CD8-positive, alpha-beta T cell (primary cell): ENCODE measurements at regions of chr6 and their contacts with region 1.

Region 1: DNA sequence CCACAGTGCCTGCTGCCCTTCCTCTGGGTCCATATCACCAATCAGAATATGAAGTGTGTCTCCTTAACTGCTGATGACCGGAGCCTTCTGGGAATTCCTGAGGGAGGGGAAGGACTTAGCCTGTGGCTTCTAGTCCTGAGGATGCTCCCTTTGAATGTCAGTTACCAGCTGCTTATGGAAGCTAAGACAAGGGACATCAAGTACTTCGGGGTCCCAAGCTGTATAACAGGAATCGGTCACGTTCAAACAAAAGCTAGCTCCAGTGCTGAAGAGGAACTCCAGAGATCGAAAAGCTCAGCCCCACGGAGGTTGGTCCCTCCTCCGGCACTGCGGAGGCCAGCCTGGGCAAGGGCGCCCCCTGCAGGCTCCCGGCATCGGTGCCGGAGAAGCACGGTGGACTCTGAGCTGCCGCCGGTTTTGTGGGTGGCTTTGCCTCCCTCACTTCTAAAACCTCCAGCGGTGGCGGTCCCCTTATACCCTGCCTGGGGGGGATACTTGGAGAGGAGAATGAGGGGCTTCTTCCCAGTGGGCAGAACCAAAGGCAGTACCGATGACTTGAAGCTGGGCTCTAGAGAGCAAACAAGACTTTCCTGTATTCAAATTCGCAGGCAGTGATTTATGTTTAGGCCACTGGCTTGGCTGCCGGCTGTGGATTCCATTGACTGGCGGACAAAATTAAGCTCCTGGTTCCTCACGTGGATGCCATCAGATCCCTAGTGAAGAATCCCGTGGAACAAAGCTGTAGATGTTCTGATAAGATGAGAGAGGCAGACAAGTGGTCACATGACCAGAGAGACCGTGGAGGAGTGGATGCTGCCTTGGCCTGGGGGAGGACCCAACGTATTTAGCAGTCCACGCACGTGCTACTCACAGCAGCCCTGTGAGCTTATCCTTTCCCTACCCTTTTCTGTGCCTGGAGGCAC is 16.2 kb upstream of the UBR2 start:
- DNase-seq: peak; percentile 76 to 94 (median 85)
- ATAC-seq: peak; percentile 99
- H3K4me3 ChIP-seq: peak overlapping the region; percentile 19 to 36
- H3K4me3 Mint-ChIP-seq: peak overlapping the region; percentile 67
- H3K27ac ChIP-seq: no peak overlapping the region
- H3K27ac Mint-ChIP-seq: no peak overlapping the region
- H3K4me1 ChIP-seq: peaks cover 3% of the 10 kb centered on the region
- H3K4me1 Mint-ChIP-seq: peaks cover 11% of the 10 kb centered on the region
- H3K27me3 ChIP-seq: no peaks in the 10 kb centered on the region
- H3K27me3 Mint-ChIP-seq: peaks cover 3% of the 10 kb centered on the region
- CTCF ChIP-seq: peak; percentile 96

Region 2: DNA sequence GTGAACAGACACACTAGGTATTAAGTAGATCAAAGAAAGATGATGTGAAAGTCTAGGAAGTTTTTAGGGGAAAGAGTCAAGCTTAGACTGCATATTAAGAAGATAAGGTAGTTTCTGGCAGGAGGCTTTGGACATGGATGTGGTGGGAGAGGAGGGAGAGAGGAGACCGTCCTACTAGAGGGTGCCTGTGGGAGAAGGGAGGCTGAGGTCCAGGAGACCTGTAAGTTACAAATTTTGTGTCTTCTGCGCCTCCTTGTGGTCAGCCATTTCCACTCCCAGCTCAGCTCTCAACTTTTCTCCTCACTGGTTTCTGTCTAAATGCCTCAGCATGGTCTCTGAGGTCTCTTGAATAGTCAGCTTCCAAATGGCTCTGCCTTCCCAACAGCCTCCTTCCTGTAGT is 1702.1 kb before region 1 on chr6:
- CTCF ChIA-PET with region 1: no interaction called
- POLR2A ChIA-PET with region 1: no interaction called
- intact Hi-C with region 1: no loop called
- DNase-seq: peak in 3 of 9 experiments; percentile 7 to 42 (median 38)
- ATAC-seq: no peak
- H3K4me3 ChIP-seq: no peak overlapping the region
- H3K4me3 Mint-ChIP-seq: no peak overlapping the region
- H3K27ac ChIP-seq: no peak overlapping the region
- H3K27ac Mint-ChIP-seq: no peak overlapping the region
- H3K4me1 ChIP-seq: no peaks in the 10 kb centered on the region
- H3K4me1 Mint-ChIP-seq: no peaks in the 10 kb centered on the region
- H3K27me3 ChIP-seq: no peaks in the 10 kb centered on the region
- H3K27me3 Mint-ChIP-seq: peaks cover 14% of the 10 kb centered on the region
- CTCF ChIP-seq: peak; percentile 35

Region 3: GRCh38 chr6:41584668-41585205 is 962.9 kb before region 1 on chr6:
- CTCF ChIA-PET with region 1: no interaction called
- POLR2A ChIA-PET with region 1: no interaction called
- intact Hi-C with region 1: no loop called
- DNase-seq: no peak
- ATAC-seq: no peak
- H3K4me3 ChIP-seq: no peak overlapping the region
- H3K4me3 Mint-ChIP-seq: no peak overlapping the region
- H3K27ac ChIP-seq: no peak overlapping the region
- H3K27ac Mint-ChIP-seq: no peak overlapping the region
- H3K4me1 ChIP-seq: no peaks in the 10 kb centered on the region
- H3K4me1 Mint-ChIP-seq: peaks cover 6% of the 10 kb centered on the region
- H3K27me3 ChIP-seq: no peaks in the 10 kb centered on the region
- H3K27me3 Mint-ChIP-seq: no peaks in the 10 kb centered on the region
- CTCF ChIP-seq: no peak

Region 4: GRCh38 chr6:42104095-42104806 is 443.4 kb before region 1 on chr6:
- CTCF ChIA-PET with region 1: interaction called, 10 read pairs
- POLR2A ChIA-PET with region 1: no interaction called
- intact Hi-C with region 1: no loop called
- DNase-seq: peak; percentile 38 to 86 (median 72)
- ATAC-seq: peak; percentile 89
- H3K4me3 ChIP-seq: peak overlapping the region; percentile 45 to 69
- H3K4me3 Mint-ChIP-seq: peak overlapping the region; percentile 72
- H3K27ac ChIP-seq: peak overlapping the region; percentile 11 to 38
- H3K27ac Mint-ChIP-seq: peak overlapping the region; percentile 62
- H3K4me1 ChIP-seq: peaks cover 8% of the 10 kb centered on the region
- H3K4me1 Mint-ChIP-seq: peaks cover 7% of the 10 kb centered on the region
- H3K27me3 ChIP-seq: no peaks in the 10 kb centered on the region
- H3K27me3 Mint-ChIP-seq: no peaks in the 10 kb centered on the region
- CTCF ChIP-seq: peak; percentile 98

Region 5: DNA sequence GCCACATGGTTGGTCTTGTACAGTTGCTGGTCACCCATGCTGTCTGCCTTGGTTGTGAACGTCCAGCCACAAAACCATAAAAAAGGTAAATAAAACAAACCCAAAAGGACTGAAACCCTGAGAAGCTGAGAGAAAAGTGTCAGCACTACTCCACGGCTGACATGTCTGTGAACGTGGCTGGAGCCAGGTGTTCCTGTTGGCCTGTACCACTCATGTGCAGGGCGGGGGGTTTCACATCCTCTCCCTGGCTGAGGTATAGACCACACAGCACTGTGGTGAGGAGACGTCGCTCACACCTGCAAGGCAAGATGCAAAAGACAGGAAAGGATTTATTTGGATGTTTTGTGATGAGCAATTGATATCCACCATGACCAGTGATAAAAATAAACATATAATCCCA is 278.1 kb before region 1 on chr6:
- CTCF ChIA-PET with region 1: interaction called, 105 read pairs
- POLR2A ChIA-PET with region 1: no interaction called
- intact Hi-C with region 1: no loop called
- DNase-seq: peak in 6 of 9 experiments; percentile 22 to 72 (median 52)
- ATAC-seq: peak; percentile 94
- H3K4me3 ChIP-seq: no peak overlapping the region
- H3K4me3 Mint-ChIP-seq: no peak overlapping the region
- H3K27ac ChIP-seq: peak overlapping the region in 1 of 2 experiments; percentile 2
- H3K27ac Mint-ChIP-seq: peak overlapping the region; percentile 75
- H3K4me1 ChIP-seq: peaks cover 13% of the 10 kb centered on the region
- H3K4me1 Mint-ChIP-seq: peaks cover 16% of the 10 kb centered on the region
- H3K27me3 ChIP-seq: no peaks in the 10 kb centered on the region
- H3K27me3 Mint-ChIP-seq: no peaks in the 10 kb centered on the region
- CTCF ChIP-seq: no peak

Region 6: DNA sequence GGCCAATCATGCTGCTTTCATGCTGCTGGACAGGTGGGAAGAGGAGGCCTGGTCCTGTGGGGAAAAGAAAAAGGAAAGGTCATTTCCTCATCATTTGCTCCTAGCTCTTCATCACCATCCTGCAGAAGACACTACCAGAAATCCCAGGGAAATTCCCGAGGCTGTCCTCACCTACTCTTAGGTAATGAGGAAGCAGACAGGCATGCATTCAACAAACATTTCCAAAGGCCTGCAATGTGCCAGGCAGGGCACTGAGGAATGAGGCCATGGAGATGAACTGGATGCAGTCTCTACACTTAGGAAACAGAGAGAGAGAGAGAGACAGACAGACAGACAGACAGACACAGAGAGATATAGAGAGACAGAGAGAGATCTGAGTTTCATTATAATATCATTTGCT is 247.0 kb before region 1 on chr6:
- CTCF ChIA-PET with region 1: interaction called, 10 read pairs
- POLR2A ChIA-PET with region 1: no interaction called
- intact Hi-C with region 1: no loop called
- DNase-seq: no peak
- ATAC-seq: no peak
- H3K4me3 ChIP-seq: no peak overlapping the region
- H3K4me3 Mint-ChIP-seq: no peak overlapping the region
- H3K27ac ChIP-seq: no peak overlapping the region
- H3K27ac Mint-ChIP-seq: peak overlapping the region; percentile 47
- H3K4me1 ChIP-seq: peaks cover 17% of the 10 kb centered on the region
- H3K4me1 Mint-ChIP-seq: peaks cover 55% of the 10 kb centered on the region
- H3K27me3 ChIP-seq: no peaks in the 10 kb centered on the region
- H3K27me3 Mint-ChIP-seq: no peaks in the 10 kb centered on the region
- CTCF ChIP-seq: no peak

Region 7: DNA sequence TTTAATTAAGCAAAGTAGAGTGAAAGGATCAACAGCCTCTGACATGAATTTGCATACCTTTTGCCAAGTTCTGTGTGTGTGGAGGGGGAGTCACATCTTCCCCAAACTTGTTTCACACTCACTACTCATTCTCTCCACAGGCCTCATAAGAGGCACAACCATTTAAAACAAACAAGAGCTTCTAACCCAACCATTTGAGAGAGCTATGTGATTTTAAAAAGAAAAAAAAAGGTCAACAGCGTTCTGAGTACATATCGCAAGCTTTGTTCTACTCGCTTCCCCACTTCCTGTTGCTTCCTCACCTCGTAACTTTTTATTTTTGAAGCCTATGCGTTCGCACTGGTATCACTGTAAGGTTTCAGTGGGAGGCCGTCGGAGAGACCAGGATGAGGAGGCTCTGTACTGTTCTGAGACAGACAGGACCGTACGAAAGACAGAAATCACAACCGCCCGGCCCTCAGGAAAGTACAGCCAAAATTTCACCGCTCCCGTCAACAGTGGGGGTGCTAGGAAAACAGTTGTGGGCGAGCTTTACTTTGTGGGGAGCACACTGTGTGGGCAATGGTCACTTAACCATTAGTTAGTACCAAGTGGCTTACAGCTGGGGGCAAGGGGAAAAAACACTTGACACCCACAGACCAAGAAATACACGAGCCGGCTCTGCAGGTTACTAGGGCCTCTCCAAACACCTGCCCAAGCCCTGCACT is 157.3 kb before region 1 on chr6:
- CTCF ChIA-PET with region 1: interaction called, 30 read pairs
- POLR2A ChIA-PET with region 1: no interaction called
- intact Hi-C with region 1: no loop called
- DNase-seq: peak; percentile 22 to 88 (median 62)
- ATAC-seq: peak; percentile 77
- H3K4me3 ChIP-seq: peak overlapping the region; percentile 10 to 31
- H3K4me3 Mint-ChIP-seq: peak overlapping the region; percentile 80
- H3K27ac ChIP-seq: peak overlapping the region; percentile 74 to 86
- H3K27ac Mint-ChIP-seq: peak overlapping the region; percentile 100
- H3K4me1 ChIP-seq: peaks cover 99% of the 10 kb centered on the region
- H3K4me1 Mint-ChIP-seq: peaks cover 97% of the 10 kb centered on the region
- H3K27me3 ChIP-seq: no peaks in the 10 kb centered on the region
- H3K27me3 Mint-ChIP-seq: no peaks in the 10 kb centered on the region
- CTCF ChIP-seq: no peak

Region 8: GRCh38 chr6:42453031-42453653 is 94.5 kb before region 1 on chr6:
- CTCF ChIA-PET with region 1: interaction called, 19 read pairs
- POLR2A ChIA-PET with region 1: interaction called, 4 read pairs
- intact Hi-C with region 1: loop called in 1 of 2 experiments (anchors 5 kb)
- DNase-seq: peak; percentile 42 to 90 (median 76)
- ATAC-seq: peak; percentile 74
- H3K4me3 ChIP-seq: peak overlapping the region; percentile 82 to 98
- H3K4me3 Mint-ChIP-seq: peak overlapping the region; percentile 100
- H3K27ac ChIP-seq: peak overlapping the region in 1 of 2 experiments; percentile 72
- H3K27ac Mint-ChIP-seq: no peak overlapping the region
- H3K4me1 ChIP-seq: peaks cover 29% of the 10 kb centered on the region
- H3K4me1 Mint-ChIP-seq: peaks cover 33% of the 10 kb centered on the region
- H3K27me3 ChIP-seq: no peaks in the 10 kb centered on the region
- H3K27me3 Mint-ChIP-seq: no peaks in the 10 kb centered on the region
- CTCF ChIP-seq: no peak